HEK293 (cell line): ENCODE measurements at regions of chr18 and their contacts with region 1.

Region 1: DNA sequence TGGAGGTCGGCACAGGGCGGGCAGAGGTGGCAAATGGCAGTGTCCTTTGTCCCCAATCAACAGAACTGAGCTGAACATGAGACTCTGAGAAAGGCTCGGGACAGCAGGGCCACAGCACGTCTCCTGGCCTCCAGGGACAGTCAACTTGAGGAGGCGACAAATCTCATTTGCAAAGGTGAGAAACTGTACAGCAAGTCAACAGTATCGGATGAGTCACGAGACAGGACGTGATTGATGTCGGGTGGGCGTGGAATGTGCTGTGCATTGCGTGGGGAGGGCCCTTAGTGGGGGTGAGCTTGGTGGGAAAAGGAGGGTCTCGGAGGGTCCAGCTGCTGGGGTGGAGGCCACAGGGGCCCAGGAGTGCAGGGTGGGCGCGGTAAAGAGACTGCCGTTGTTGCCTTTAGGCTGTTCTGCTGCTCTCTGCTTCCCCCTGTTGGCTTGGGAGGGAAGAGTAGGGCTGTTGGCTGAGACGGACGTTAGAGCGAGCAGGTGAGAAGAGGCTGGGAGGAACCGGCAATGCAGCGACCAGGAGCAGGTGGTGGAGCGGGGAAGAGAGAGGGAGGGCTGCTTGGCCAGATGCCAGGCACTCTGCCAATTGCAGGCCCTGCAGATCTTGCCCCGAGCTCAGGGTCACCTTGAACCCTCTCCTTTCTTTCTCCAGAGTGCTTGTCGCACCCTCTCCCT is 164.3 kb downstream of the BCL2 start:
- H3K4me3 ChIP-seq: no peak overlapping the region
- H3K27ac ChIP-seq: no peak overlapping the region
- H3K4me1 ChIP-seq: peaks cover 2% of the 10 kb centered on the region; the same call in 1 of the 2 replicates
- CTCF ChIP-seq: peak; percentile 96

Region 2: GRCh38 chr18:63131106-63131958 is 24.0 kb before region 1 on chr18:
- CTCF ChIA-PET with region 1: interaction called, 12 read pairs
- POLR2A ChIA-PET with region 1: no interaction called
- H3K4me3 ChIP-seq: no peak overlapping the region
- H3K27ac ChIP-seq: no peak overlapping the region
- H3K4me1 ChIP-seq: no peaks in the 10 kb centered on the region
- CTCF ChIP-seq: peak; percentile 25; the same call in 1 of the 2 replicates

Region 3: GRCh38 chr18:63144748-63145147 is 10.6 kb before region 1 on chr18:
- CTCF ChIA-PET with region 1: interaction called, 14 read pairs
- POLR2A ChIA-PET with region 1: no interaction called
- H3K4me3 ChIP-seq: no peak overlapping the region
- H3K27ac ChIP-seq: no peak overlapping the region
- H3K4me1 ChIP-seq: no peaks in the 10 kb centered on the region
- CTCF ChIP-seq: no peak

Region 4: DNA sequence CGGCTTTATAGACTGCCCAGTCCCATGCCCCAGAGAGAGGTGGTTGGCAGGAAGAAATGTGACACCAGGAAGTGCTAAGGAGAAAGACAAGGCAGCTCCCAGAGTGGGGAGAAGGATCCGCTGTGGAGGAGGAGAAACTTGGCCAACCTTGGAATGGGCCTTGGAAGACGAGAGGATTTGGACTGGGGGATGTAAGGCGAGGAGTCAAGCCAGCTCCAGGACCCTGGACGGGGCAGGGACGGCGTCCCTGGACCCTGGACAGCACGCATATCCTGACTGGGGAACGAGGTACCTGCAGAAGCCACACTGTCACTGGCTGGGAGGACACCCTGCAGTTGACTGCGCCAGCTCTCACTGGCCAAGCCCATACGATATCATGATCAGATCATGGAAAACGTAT is 10.8 kb after region 1 on chr18:
- CTCF ChIA-PET with region 1: interaction called, 15 read pairs
- POLR2A ChIA-PET with region 1: no interaction called
- H3K4me3 ChIP-seq: no peak overlapping the region
- H3K27ac ChIP-seq: no peak overlapping the region
- H3K4me1 ChIP-seq: peaks cover 8% of the 10 kb centered on the region; the same call in 1 of the 2 replicates
- CTCF ChIP-seq: no peak